ENCODE measurements at regions of chr1 and their contacts with region 1.

Region 1: GRCh38 chr1:155208541-155209311 is at the start of gene MTX1:
- DNase-seq: peak; percentile 73 to 95 (median 86)
- ATAC-seq: peak; percentile 80
- H3K4me3 ChIP-seq: peak within 1 kb of the TSS; percentile 69
- H3K4me3 Mint-ChIP-seq: peak within 1 kb of the TSS; percentile 94
- H3K27ac ChIP-seq: peak within 1 kb of the TSS; percentile 99 to 100
- H3K27ac Mint-ChIP-seq: peak within 1 kb of the TSS; percentile 96
- H3K4me1 ChIP-seq: peaks cover 30% of the 10 kb centered on the region
- H3K4me1 Mint-ChIP-seq: peaks cover 31% of the 10 kb centered on the region
- H3K27me3 ChIP-seq: no peaks in the 10 kb centered on the region
- H3K27me3 Mint-ChIP-seq: no peaks in the 10 kb centered on the region
- CTCF ChIP-seq: no peak
- total RNA-seq, gene MTX1: 19.9 to 20.7 TPM

Region 2: GRCh38 chr1:153990468-153991150 is 1218.1 kb before region 1 on chr1 and contains the start of gene RPS27:
- CTCF ChIA-PET with region 1: no interaction called
- POLR2A ChIA-PET with region 1: no interaction called
- intact Hi-C with region 1: no loop called
- DNase-seq: peak; percentile 77 to 98 (median 84)
- ATAC-seq: peak; percentile 85
- H3K4me3 ChIP-seq: peak within 1 kb of the TSS; percentile 71
- H3K4me3 Mint-ChIP-seq: peak within 1 kb of the TSS; percentile 97
- H3K27ac ChIP-seq: peak within 1 kb of the TSS; percentile 97
- H3K27ac Mint-ChIP-seq: peak within 1 kb of the TSS; percentile 96
- H3K4me1 ChIP-seq: peaks cover 40% of the 10 kb centered on the region
- H3K4me1 Mint-ChIP-seq: peaks cover 49% of the 10 kb centered on the region
- H3K27me3 ChIP-seq: peaks cover 0 to 3% of the 10 kb centered on the region in 2 experiments
- H3K27me3 Mint-ChIP-seq: peaks cover 9% of the 10 kb centered on the region
- CTCF ChIP-seq: no peak
- total RNA-seq, gene RPS27: 7,636 to 8,442 TPM

Region 3: GRCh38 chr1:155001675-155002463 is 206.9 kb before region 1 on chr1:
- CTCF ChIA-PET with region 1: no interaction called
- POLR2A ChIA-PET with region 1: no interaction called
- intact Hi-C with region 1: no loop called
- DNase-seq: peak; percentile 94 to 99 (median 98)
- ATAC-seq: peak; percentile 73
- H3K4me3 ChIP-seq: peak overlapping the region; percentile 73
- H3K4me3 Mint-ChIP-seq: peak overlapping the region; percentile 99
- H3K27ac ChIP-seq: peak overlapping the region; percentile 92 to 96
- H3K27ac Mint-ChIP-seq: peak overlapping the region; percentile 90
- H3K4me1 ChIP-seq: peaks cover 80% of the 10 kb centered on the region
- H3K4me1 Mint-ChIP-seq: peaks cover 65% of the 10 kb centered on the region
- H3K27me3 ChIP-seq: no peaks in the 10 kb centered on the region
- H3K27me3 Mint-ChIP-seq: no peaks in the 10 kb centered on the region
- CTCF ChIP-seq: no peak

Region 4: GRCh38 chr1:155193275-155193990 is 15.3 kb before region 1 on chr1:
- CTCF ChIA-PET with region 1: interaction called, 15 read pairs
- POLR2A ChIA-PET with region 1: interaction called, 18 read pairs
- intact Hi-C with region 1: loop called (anchors 1 to 2 kb)
- DNase-seq: peak; percentile 31 to 81 (median 62)
- ATAC-seq: peak; percentile 27
- H3K4me3 ChIP-seq: peak overlapping the region; percentile 62
- H3K4me3 Mint-ChIP-seq: peak overlapping the region; percentile 96
- H3K27ac ChIP-seq: peak overlapping the region; percentile 21 to 89
- H3K27ac Mint-ChIP-seq: peak overlapping the region; percentile 96
- H3K4me1 ChIP-seq: peaks cover 38% of the 10 kb centered on the region
- H3K4me1 Mint-ChIP-seq: peaks cover 27% of the 10 kb centered on the region
- H3K27me3 ChIP-seq: no peaks in the 10 kb centered on the region
- H3K27me3 Mint-ChIP-seq: no peaks in the 10 kb centered on the region
- CTCF ChIP-seq: peak; percentile 97

Region 5: GRCh38 chr1:155244368-155245162 is 35.8 kb after region 1 on chr1:
- CTCF ChIA-PET with region 1: interaction called, 12 read pairs
- POLR2A ChIA-PET with region 1: interaction called, 22 read pairs
- intact Hi-C with region 1: loop called (anchors 1 to 5 kb)
- DNase-seq: peak; percentile 83 to 98 (median 91)
- ATAC-seq: peak; percentile 92
- H3K4me3 ChIP-seq: peak overlapping the region; percentile 68
- H3K4me3 Mint-ChIP-seq: peak overlapping the region; percentile 90
- H3K27ac ChIP-seq: peak overlapping the region; percentile 61 to 66
- H3K27ac Mint-ChIP-seq: peak overlapping the region; percentile 96
- H3K4me1 ChIP-seq: peaks cover 46% of the 10 kb centered on the region
- H3K4me1 Mint-ChIP-seq: peaks cover 47% of the 10 kb centered on the region
- H3K27me3 ChIP-seq: no peaks in the 10 kb centered on the region
- H3K27me3 Mint-ChIP-seq: peaks cover 5% of the 10 kb centered on the region
- CTCF ChIP-seq: peak; percentile 56

Region 6: GRCh38 chr1:155323798-155324610 is 115.3 kb after region 1 on chr1:
- CTCF ChIA-PET with region 1: interaction called, 4 read pairs
- POLR2A ChIA-PET with region 1: interaction called, 4 read pairs
- intact Hi-C with region 1: loop called in 1 of 2 experiments (anchors 1 kb)
- DNase-seq: peak; percentile 69 to 94 (median 80)
- ATAC-seq: peak; percentile 79
- H3K4me3 ChIP-seq: peak overlapping the region; percentile 100
- H3K4me3 Mint-ChIP-seq: peak overlapping the region; percentile 92
- H3K27ac ChIP-seq: peak overlapping the region; percentile 93 to 97
- H3K27ac Mint-ChIP-seq: peak overlapping the region; percentile 69
- H3K4me1 ChIP-seq: peaks cover 49% of the 10 kb centered on the region
- H3K4me1 Mint-ChIP-seq: peaks cover 46% of the 10 kb centered on the region
- H3K27me3 ChIP-seq: no peaks in the 10 kb centered on the region
- H3K27me3 Mint-ChIP-seq: no peaks in the 10 kb centered on the region
- CTCF ChIP-seq: no peak

Measured in CD4-positive, alpha-beta T cell (primary cell).